ENCODE measurements at regions of chr19 and their contacts with region 1.

Region 1: GRCh38 chr19:5690125-5690954 is at the start of gene RPL36:
- DNase-seq: peak; percentile 99
- ATAC-seq: peak; percentile 19
- H3K4me3 Mint-ChIP-seq: peak within 1 kb of the TSS; percentile 99
- H3K27ac Mint-ChIP-seq: peak within 1 kb of the TSS; percentile 95
- H3K4me1 Mint-ChIP-seq: peaks cover 15% of the 10 kb centered on the region
- H3K27me3 Mint-ChIP-seq: peaks cover 5% of the 10 kb centered on the region; the same call in 1 of the 2 replicates
- CTCF ChIP-seq: peak; percentile 84
- total RNA-seq, gene RPL36: 1,080 to 1,240 TPM (median 1,178 TPM) in 3 replicates

Region 2: GRCh38 chr19:5547881-5548280 is 142.5 kb before region 1 on chr19:
- CTCF ChIA-PET with region 1: interaction called, 13 read pairs
- POLR2A ChIA-PET with region 1: no interaction called
- DNase-seq: peak; percentile 69
- ATAC-seq: peak; percentile 74
- H3K4me3 Mint-ChIP-seq: no peak overlapping the region
- H3K27ac Mint-ChIP-seq: peak overlapping the region; percentile 48; the same call in 1 of the 2 replicates
- H3K4me1 Mint-ChIP-seq: peaks cover 12% of the 10 kb centered on the region
- H3K27me3 Mint-ChIP-seq: peaks cover 15% of the 10 kb centered on the region
- CTCF ChIP-seq: peak; percentile 36; the same call in 1 of the 2 replicates

Region 3: GRCh38 chr19:5665796-5666513 is 24.4 kb before region 1 on chr19:
- CTCF ChIA-PET with region 1: interaction called, 15 read pairs
- POLR2A ChIA-PET with region 1: interaction called, 4 read pairs
- DNase-seq: no peak
- ATAC-seq: no peak
- H3K4me3 Mint-ChIP-seq: no peak overlapping the region
- H3K27ac Mint-ChIP-seq: no peak overlapping the region
- H3K4me1 Mint-ChIP-seq: peaks cover 11% of the 10 kb centered on the region
- H3K27me3 Mint-ChIP-seq: no peaks in the 10 kb centered on the region
- CTCF ChIP-seq: no peak

Region 4: DNA sequence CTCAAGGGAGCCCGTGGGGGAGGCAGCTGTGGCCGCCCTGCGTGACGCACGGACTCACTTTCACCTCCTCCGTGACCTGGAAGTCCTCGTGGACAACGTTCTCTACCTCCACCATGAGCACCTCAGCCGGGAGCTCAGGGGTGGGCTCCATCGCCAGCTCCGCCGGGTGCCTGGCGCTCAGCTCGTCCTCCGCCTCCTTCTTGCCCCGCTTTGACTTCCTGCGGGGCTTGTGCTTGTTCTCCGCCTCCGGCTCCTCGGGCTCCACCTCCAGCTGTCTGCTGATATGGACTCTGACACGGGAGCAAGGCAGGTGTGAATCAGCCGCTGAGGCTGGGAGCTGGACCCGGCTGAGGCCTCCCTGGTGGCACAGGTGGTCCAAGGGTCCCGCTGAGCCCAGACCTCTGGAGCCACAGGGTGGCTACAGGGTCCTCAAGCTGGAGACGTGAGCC is 21.4 kb after region 1 on chr19:
- CTCF ChIA-PET with region 1: interaction called, 12 read pairs
- POLR2A ChIA-PET with region 1: interaction called, 5 read pairs
- DNase-seq: no peak
- ATAC-seq: no peak
- H3K4me3 Mint-ChIP-seq: no peak overlapping the region
- H3K27ac Mint-ChIP-seq: no peak overlapping the region
- H3K4me1 Mint-ChIP-seq: no peaks in the 10 kb centered on the region
- H3K27me3 Mint-ChIP-seq: no peaks in the 10 kb centered on the region
- CTCF ChIP-seq: no peak

Region 5: GRCh38 chr19:5727453-5728050 is 37.2 kb after region 1 on chr19:
- CTCF ChIA-PET with region 1: no interaction called
- POLR2A ChIA-PET with region 1: no interaction called
- DNase-seq: no peak
- ATAC-seq: no peak
- H3K4me3 Mint-ChIP-seq: no peak overlapping the region
- H3K27ac Mint-ChIP-seq: no peak overlapping the region
- H3K4me1 Mint-ChIP-seq: no peaks in the 10 kb centered on the region
- H3K27me3 Mint-ChIP-seq: peaks cover 10% of the 10 kb centered on the region
- CTCF ChIP-seq: no peak

Region 6: GRCh38 chr19:5790573-5791520 is 100.5 kb after region 1 on chr19 and contains the start of gene DUS3L:
- CTCF ChIA-PET with region 1: interaction called, 12 read pairs
- POLR2A ChIA-PET with region 1: interaction called, 4 read pairs
- DNase-seq: peak; percentile 96
- ATAC-seq: peak; percentile 96
- H3K4me3 Mint-ChIP-seq: peak within 1 kb of the TSS; percentile 98
- H3K27ac Mint-ChIP-seq: peak within 1 kb of the TSS; percentile 100
- H3K4me1 Mint-ChIP-seq: peaks cover 5% of the 10 kb centered on the region
- H3K27me3 Mint-ChIP-seq: no peaks in the 10 kb centered on the region; the same call in 1 of the 2 replicates
- CTCF ChIP-seq: no peak
- total RNA-seq, gene DUS3L: 30.6 to 39.3 TPM (median 34.6 TPM) in 3 replicates